Right cardiac atrium (tissue), 5 donors: ENCODE measurements at regions of chr1 and their contacts with region 1.

Region 1: GRCh38 chr1:169928438-169929209 is 34.9 kb upstream of the SCYL3 start:
- DNase-seq: no peak
- ATAC-seq: peak in 1 of 2 donors; percentile 46
- H3K4me3 ChIP-seq: no peak overlapping the region
- H3K27ac ChIP-seq: no peak overlapping the region
- H3K4me1 ChIP-seq: no peaks in the 10 kb centered on the region
- H3K27me3 ChIP-seq: no peaks in the 10 kb centered on the region

Region 2: GRCh38 chr1:170776777-170777176 is 848.2 kb after region 1 on chr1:
- intact Hi-C with region 1: loop called in 1 of 4 experiments (anchors 10 kb)
- DNase-seq: peak in 1 of 3 donors; percentile 22
- ATAC-seq: peak; percentile 55 to 59
- H3K4me3 ChIP-seq: no peak overlapping the region
- H3K27ac ChIP-seq: no peak overlapping the region
- H3K4me1 ChIP-seq: no peaks in the 10 kb centered on the region
- H3K27me3 ChIP-seq: no peaks in the 10 kb centered on the region